Caco-2 (cell line): ENCODE measurements at regions of chr6 and their contacts with region 1.

Region 1: GRCh38 chr6:131976545-131977061 is 25.4 kb upstream of the CCN2 start:
- DNase-seq: peak; percentile 28 to 52
- H3K4me3 ChIP-seq: no peak overlapping the region
- H3K4me3 Mint-ChIP-seq: no peak overlapping the region
- H3K27ac Mint-ChIP-seq: no peak overlapping the region
- H3K4me1 ChIP-seq: peaks cover 36% of the 10 kb centered on the region
- H3K4me1 Mint-ChIP-seq: peaks cover 7% of the 10 kb centered on the region
- H3K27me3 ChIP-seq: no peaks in the 10 kb centered on the region
- H3K27me3 Mint-ChIP-seq: no peaks in the 10 kb centered on the region
- CTCF ChIP-seq: no peak

Region 2: DNA sequence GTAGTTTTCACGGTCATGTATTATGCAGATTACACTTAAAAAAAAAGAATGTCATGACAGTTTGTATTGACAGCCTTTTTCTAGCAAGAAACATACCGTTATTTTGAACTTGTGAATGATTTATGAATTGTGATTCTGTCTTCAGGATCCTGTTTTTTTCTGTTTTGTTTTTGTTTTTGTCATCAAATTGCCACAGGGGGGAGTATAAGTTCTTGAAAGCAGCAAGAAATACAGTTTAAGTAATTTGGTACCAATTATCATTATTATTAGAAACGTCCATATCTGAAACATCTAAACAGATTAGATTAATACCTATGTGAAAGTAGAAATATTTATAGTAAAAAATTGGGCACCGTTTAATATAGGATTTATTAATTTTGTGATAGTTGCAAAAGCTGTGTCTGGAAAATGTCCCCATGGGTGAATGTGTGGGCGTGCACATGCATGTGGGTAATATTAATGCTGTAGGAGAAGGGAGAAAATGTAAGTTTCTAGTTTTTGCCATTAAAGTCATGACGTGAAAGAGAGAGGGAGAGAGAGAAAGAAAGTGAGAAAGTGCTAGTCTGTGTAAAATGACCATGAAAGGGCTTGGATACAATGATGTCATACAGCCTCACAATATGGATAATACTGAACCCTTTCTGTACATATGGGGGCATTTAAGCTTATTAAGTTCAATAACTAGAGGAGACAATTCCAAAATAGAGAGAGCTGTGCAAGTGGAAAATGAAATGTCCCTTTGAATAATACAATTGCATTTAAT is 16.1 kb before region 1 on chr6:
- CTCF ChIA-PET with region 1: no interaction called
- POLR2A ChIA-PET with region 1: no interaction called
- intact Hi-C with region 1: loop called (anchors 1 kb)
- DNase-seq: no peak
- H3K4me3 ChIP-seq: no peak overlapping the region
- H3K4me3 Mint-ChIP-seq: no peak overlapping the region
- H3K27ac Mint-ChIP-seq: no peak overlapping the region
- H3K4me1 ChIP-seq: peaks cover 21% of the 10 kb centered on the region
- H3K4me1 Mint-ChIP-seq: no peaks in the 10 kb centered on the region
- H3K27me3 ChIP-seq: no peaks in the 10 kb centered on the region
- H3K27me3 Mint-ChIP-seq: no peaks in the 10 kb centered on the region
- CTCF ChIP-seq: no peak

Region 3: DNA sequence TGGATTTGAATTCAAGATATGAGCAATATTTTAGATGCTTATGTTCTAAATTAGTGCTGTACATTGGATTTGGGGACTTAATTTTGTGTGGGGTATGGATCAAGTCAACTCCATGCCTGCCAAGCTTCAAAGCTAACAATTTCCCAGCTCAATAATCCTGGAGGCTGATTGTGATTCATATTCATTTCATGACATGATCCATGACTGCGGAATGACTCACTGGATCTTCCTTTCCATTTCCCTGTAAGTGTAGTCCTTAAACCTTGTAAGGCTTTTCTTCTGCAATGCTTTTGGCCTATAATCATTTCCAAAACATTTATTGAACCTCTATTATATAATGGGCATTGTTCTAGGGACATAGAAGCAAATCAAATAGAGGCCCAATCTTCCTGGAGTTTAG is 19.3 kb after region 1 on chr6:
- CTCF ChIA-PET with region 1: no interaction called
- POLR2A ChIA-PET with region 1: no interaction called
- intact Hi-C with region 1: loop called (anchors 2 kb)
- DNase-seq: no peak
- H3K4me3 ChIP-seq: no peak overlapping the region
- H3K4me3 Mint-ChIP-seq: no peak overlapping the region
- H3K27ac Mint-ChIP-seq: no peak overlapping the region
- H3K4me1 ChIP-seq: peaks cover 16% of the 10 kb centered on the region
- H3K4me1 Mint-ChIP-seq: peaks cover 18% of the 10 kb centered on the region
- H3K27me3 ChIP-seq: no peaks in the 10 kb centered on the region
- H3K27me3 Mint-ChIP-seq: no peaks in the 10 kb centered on the region
- CTCF ChIP-seq: no peak

Region 4: DNA sequence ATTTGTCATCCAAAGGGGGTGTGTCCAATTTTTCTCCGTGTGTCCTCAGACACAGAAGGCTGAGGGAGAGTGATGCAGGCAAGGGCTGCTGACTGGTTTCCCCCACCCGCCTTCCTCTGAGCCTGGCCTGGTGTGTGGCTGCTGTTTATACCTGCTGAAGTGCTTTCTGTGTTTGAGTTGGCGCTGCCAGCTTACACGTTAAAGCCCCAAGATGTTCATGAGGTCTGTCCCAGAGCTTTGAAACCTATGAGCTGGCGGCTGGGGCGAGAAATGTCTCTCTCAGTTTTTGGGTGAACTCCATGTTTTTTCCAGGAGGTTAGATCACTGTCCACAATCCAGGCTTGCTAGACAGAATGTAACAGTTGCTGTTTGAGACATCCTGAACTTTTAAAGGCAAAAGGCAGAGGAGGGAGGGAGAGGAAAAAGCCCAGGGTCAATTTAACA is 43.6 kb after region 1 on chr6:
- CTCF ChIA-PET with region 1: no interaction called
- POLR2A ChIA-PET with region 1: no interaction called
- intact Hi-C with region 1: loop called (anchors 1 kb)
- DNase-seq: no peak
- H3K4me3 ChIP-seq: no peak overlapping the region
- H3K4me3 Mint-ChIP-seq: no peak overlapping the region
- H3K27ac Mint-ChIP-seq: no peak overlapping the region
- H3K4me1 ChIP-seq: peaks cover 30% of the 10 kb centered on the region
- H3K4me1 Mint-ChIP-seq: peaks cover 21% of the 10 kb centered on the region
- H3K27me3 ChIP-seq: no peaks in the 10 kb centered on the region
- H3K27me3 Mint-ChIP-seq: no peaks in the 10 kb centered on the region
- CTCF ChIP-seq: no peak

Region 5: GRCh38 chr6:132140189-132140588 is 163.6 kb after region 1 on chr6:
- CTCF ChIA-PET with region 1: no interaction called
- POLR2A ChIA-PET with region 1: no interaction called
- intact Hi-C with region 1: no loop called
- DNase-seq: no peak
- H3K4me3 ChIP-seq: no peak overlapping the region
- H3K4me3 Mint-ChIP-seq: no peak overlapping the region
- H3K27ac Mint-ChIP-seq: no peak overlapping the region
- H3K4me1 ChIP-seq: no peaks in the 10 kb centered on the region
- H3K4me1 Mint-ChIP-seq: no peaks in the 10 kb centered on the region
- H3K27me3 ChIP-seq: no peaks in the 10 kb centered on the region
- H3K27me3 Mint-ChIP-seq: peaks cover 4% of the 10 kb centered on the region
- CTCF ChIP-seq: no peak